Mammary epithelial cell (primary cell): ENCODE measurements at regions of chr6 and their contacts with region 1.

Region 1: DNA sequence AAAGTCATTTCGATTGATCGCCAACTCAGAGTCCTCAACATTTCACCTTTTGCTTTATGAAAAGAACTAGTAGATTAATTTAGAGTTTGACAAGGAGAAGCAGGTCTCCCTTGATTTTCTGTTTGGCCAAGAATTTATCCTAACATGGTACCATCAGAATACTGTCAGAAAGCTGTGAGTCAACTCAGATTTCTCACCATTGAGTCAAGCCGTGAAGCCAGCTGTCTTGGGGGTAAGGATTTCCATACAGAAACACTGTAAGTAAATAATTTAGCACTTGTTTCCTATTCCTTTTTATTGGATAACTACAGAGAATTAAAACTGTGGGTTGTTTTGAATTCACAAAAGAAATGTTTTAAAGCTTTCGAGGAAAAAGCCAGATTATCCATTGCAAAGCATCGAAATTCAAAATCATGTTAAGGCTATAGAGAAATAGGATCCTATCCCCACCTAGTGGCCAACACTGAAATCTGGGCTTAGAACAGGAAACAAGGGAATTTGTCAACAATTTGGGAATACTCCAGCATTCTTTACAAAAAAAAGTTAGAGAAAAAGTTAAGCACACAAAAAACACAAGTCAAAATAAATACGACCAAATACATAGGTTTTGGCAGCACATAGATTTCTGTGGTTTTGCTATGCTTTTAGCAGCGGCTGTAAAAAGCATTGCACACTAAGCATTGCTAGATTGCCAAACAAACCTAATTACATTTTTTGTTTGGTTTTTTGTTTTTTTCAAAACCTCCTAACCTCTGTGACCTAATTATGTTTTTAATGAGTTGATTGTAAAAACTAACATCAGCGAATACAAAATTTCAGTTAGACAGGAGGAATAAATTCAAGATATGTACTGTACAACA is 44.2 kb downstream of the COL11A2 start:
- DNase-seq: peak; percentile 17
- H3K4me3 ChIP-seq: no peak overlapping the region
- H3K27ac ChIP-seq: no peak overlapping the region
- H3K4me1 ChIP-seq: no peaks in the 10 kb centered on the region
- H3K27me3 ChIP-seq: no peaks in the 10 kb centered on the region
- CTCF ChIP-seq: peak; percentile 70 to 79

Region 2: GRCh38 chr6:33123732-33124524 is 24.1 kb before region 1 on chr6:
- CTCF ChIA-PET with region 1: no interaction called
- dilution Hi-C with region 1: no loop called
- in situ Hi-C with region 1: no loop called
- intact Hi-C with region 1: loop called (anchors 1 kb)
- DNase-seq: no peak
- H3K4me3 ChIP-seq: no peak overlapping the region
- H3K27ac ChIP-seq: no peak overlapping the region
- H3K4me1 ChIP-seq: no peaks in the 10 kb centered on the region
- H3K27me3 ChIP-seq: no peaks in the 10 kb centered on the region
- CTCF ChIP-seq: peak; percentile 49 to 53